ENCODE measurements at regions of chr11 and their contacts with region 1.

Region 1: GRCh38 chr11:72483412-72484186 is 49.3 kb upstream of the CLPB start:
- DNase-seq: peak; percentile 32
- H3K4me3 Mint-ChIP-seq: no peak overlapping the region
- H3K27ac Mint-ChIP-seq: peak overlapping the region; percentile 15
- H3K4me1 Mint-ChIP-seq: peaks cover 9% of the 10 kb centered on the region
- H3K27me3 Mint-ChIP-seq: peaks cover 8% of the 10 kb centered on the region

Region 2: GRCh38 chr11:72511393-72512047 is 27.9 kb after region 1 on chr11:
- intact Hi-C with region 1: no loop called
- DNase-seq: no peak
- H3K4me3 Mint-ChIP-seq: no peak overlapping the region
- H3K27ac Mint-ChIP-seq: no peak overlapping the region
- H3K4me1 Mint-ChIP-seq: no peaks in the 10 kb centered on the region
- H3K27me3 Mint-ChIP-seq: peaks cover 13% of the 10 kb centered on the region

Region 3: DNA sequence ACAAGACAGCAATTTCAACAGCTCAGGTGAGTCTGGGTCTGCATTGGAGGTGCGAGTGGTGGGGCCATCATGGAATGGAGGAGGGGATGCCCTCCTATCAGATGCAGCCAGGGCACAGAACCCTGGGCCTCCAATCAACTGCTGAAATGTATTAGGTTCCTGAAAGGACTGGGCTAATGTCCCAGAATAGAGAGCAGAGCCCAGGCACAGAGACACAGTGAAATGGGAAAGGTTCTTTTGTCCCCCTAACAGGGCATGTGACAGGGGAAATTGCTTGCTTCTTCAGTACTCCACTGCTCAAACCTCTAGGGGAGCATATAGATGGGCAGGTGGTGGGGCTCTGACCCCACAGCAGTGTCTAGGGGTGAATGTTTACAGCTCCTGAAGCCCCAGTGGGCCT is 38.1 kb after region 1 on chr11:
- intact Hi-C with region 1: loop called (anchors 2 kb)
- DNase-seq: no peak
- H3K4me3 Mint-ChIP-seq: no peak overlapping the region
- H3K27ac Mint-ChIP-seq: no peak overlapping the region
- H3K4me1 Mint-ChIP-seq: peaks cover 29% of the 10 kb centered on the region
- H3K27me3 Mint-ChIP-seq: peaks cover 7% of the 10 kb centered on the region

Region 4: DNA sequence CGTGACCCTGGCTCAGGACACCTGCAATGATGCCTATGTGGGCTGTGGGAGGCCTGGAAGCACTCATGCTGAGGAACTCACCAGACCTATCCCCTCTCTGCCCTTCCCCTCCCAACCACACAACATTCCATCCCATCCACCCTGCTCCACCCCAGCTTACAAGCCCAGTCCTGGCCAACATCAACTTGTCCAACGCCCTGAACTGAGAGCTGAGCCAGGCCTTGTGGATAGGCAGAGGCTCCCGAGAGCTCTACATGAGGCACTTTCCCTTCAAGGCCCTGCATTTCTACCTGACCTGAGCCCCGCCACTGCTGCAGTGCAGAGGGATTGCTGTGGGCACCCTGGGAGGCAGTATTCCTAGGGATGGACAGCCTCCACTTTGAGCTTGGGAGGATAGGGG is 78.3 kb after region 1 on chr11:
- intact Hi-C with region 1: no loop called
- DNase-seq: no peak
- H3K4me3 Mint-ChIP-seq: no peak overlapping the region
- H3K27ac Mint-ChIP-seq: no peak overlapping the region
- H3K4me1 Mint-ChIP-seq: no peaks in the 10 kb centered on the region
- H3K27me3 Mint-ChIP-seq: peaks cover 16% of the 10 kb centered on the region

Region 5: DNA sequence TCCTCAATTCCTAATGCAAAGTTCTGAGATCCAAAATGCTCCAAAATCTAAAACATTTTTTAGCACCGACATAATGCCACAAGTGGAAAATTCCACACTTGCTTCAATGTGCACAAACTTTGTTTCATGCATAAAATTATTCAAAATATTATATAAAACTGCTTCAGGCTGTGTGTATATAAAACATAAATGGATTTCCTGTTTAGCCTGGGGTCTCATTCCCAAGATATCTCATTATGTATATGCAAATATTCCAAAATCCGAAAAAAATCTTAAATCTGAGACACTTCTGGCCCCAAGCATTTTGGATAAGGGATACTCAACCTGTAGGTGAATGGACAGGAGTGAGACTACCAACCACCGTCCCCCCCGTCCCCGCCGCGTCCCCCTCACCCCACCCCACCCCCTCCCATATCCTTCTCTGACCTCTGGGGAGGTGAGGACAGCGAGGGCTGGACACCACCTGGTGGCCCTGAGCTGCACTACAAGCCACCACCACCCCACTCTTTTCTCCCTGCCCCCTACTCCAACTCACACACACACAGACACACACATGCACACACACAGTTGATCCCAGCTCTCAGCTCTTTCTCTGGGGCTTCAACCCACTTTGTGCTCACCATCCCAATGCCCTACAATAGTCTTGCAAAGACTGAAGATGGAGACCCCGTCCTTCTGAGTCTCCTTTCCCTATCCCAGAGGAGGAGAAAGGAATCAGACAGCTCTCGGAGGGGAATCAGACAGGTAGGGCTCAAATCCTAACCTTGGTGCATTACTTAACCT is 89.7 kb after region 1 on chr11:
- intact Hi-C with region 1: loop called (anchors 1 kb)
- DNase-seq: no peak
- H3K4me3 Mint-ChIP-seq: no peak overlapping the region
- H3K27ac Mint-ChIP-seq: no peak overlapping the region
- H3K4me1 Mint-ChIP-seq: peaks cover 19% of the 10 kb centered on the region
- H3K27me3 Mint-ChIP-seq: peaks cover 11% of the 10 kb centered on the region

Region 6: GRCh38 chr11:72642884-72643511 is 159.4 kb after region 1 on chr11:
- intact Hi-C with region 1: loop called (anchors 1 kb)
- DNase-seq: peak; percentile 60
- H3K4me3 Mint-ChIP-seq: peak overlapping the region; percentile 62
- H3K27ac Mint-ChIP-seq: no peak overlapping the region
- H3K4me1 Mint-ChIP-seq: no peaks in the 10 kb centered on the region
- H3K27me3 Mint-ChIP-seq: peaks cover 3% of the 10 kb centered on the region

Region 7: GRCh38 chr11:72683782-72684200 is 200.2 kb after region 1 on chr11:
- intact Hi-C with region 1: loop called (anchors 1 kb)
- DNase-seq: peak; percentile 49
- H3K4me3 Mint-ChIP-seq: no peak overlapping the region
- H3K27ac Mint-ChIP-seq: peak overlapping the region; percentile 50
- H3K4me1 Mint-ChIP-seq: peaks cover 43% of the 10 kb centered on the region
- H3K27me3 Mint-ChIP-seq: peaks cover 10% of the 10 kb centered on the region